ENCODE measurements at regions of chr7 and their contacts with region 1.

Region 1: GRCh38 chr7:66920769-66921395 is at the start of gene TMEM248:
- DNase-seq: peak; percentile 85
- ATAC-seq: peak; percentile 88
- H3K4me3 ChIP-seq: peak within 1 kb of the TSS; percentile 84
- H3K27ac ChIP-seq: peak within 1 kb of the TSS; percentile 80
- H3K4me1 ChIP-seq: peaks cover 11% of the 10 kb centered on the region
- H3K27me3 ChIP-seq: no peaks in the 10 kb centered on the region
- CTCF ChIP-seq: no peak
- EP300 ChIP-seq: no peak
- POLR2A ChIP-seq: peak; percentile 97
- RAD21 ChIP-seq: no peak
- polyA plus RNA-seq, gene TMEM248: 6.3 to 10.5 TPM

Region 2: GRCh38 chr7:66740302-66740979 is 180.4 kb before region 1 on chr7 and contains the start of gene RABGEF1:
- CTCF ChIA-PET with region 1: no interaction called
- POLR2A ChIA-PET with region 1: no interaction called
- RAD21 ChIA-PET with region 1: no interaction called
- SMC1A ChIA-PET with region 1: interaction called, 3 read pairs
- in situ Hi-C with region 1: no loop called
- intact Hi-C with region 1: loop called (anchors 10 kb)
- DNase-seq: peak; percentile 89
- ATAC-seq: peak; percentile 93
- H3K4me3 ChIP-seq: peak within 1 kb of the TSS; percentile 100
- H3K27ac ChIP-seq: peak within 1 kb of the TSS; percentile 88
- H3K4me1 ChIP-seq: peaks cover 18% of the 10 kb centered on the region
- H3K27me3 ChIP-seq: no peaks in the 10 kb centered on the region
- CTCF ChIP-seq: no peak
- EP300 ChIP-seq: 0 out of 4 replicates have a peak, but pooled peaks of 1 of the 2 experiments have one; percentile 28
- POLR2A ChIP-seq: peak; percentile 96
- RAD21 ChIP-seq: no peak
- polyA plus RNA-seq, gene RABGEF1: 10.2 to 11.8 TPM

Region 3: GRCh38 chr7:66844552-66845378 is 76.1 kb before region 1 on chr7:
- CTCF ChIA-PET with region 1: no interaction called
- POLR2A ChIA-PET with region 1: interaction called, 3 read pairs
- RAD21 ChIA-PET with region 1: interaction called, 5 read pairs
- SMC1A ChIA-PET with region 1: interaction called, 5 read pairs
- in situ Hi-C with region 1: no loop called
- intact Hi-C with region 1: loop called (anchors 2 kb)
- DNase-seq: peak; percentile 92
- ATAC-seq: peak; percentile 93
- H3K4me3 ChIP-seq: peak overlapping the region; percentile 93
- H3K27ac ChIP-seq: peak overlapping the region; percentile 61
- H3K4me1 ChIP-seq: no peaks in the 10 kb centered on the region; the same call in 1 of the 2 replicates
- H3K27me3 ChIP-seq: no peaks in the 10 kb centered on the region
- CTCF ChIP-seq: peak in 1 of 3 experiments; percentile 36; a peak in 1 of 6 replicates
- EP300 ChIP-seq: no peak
- POLR2A ChIP-seq: peak; percentile 94
- RAD21 ChIP-seq: no peak

Region 4: DNA sequence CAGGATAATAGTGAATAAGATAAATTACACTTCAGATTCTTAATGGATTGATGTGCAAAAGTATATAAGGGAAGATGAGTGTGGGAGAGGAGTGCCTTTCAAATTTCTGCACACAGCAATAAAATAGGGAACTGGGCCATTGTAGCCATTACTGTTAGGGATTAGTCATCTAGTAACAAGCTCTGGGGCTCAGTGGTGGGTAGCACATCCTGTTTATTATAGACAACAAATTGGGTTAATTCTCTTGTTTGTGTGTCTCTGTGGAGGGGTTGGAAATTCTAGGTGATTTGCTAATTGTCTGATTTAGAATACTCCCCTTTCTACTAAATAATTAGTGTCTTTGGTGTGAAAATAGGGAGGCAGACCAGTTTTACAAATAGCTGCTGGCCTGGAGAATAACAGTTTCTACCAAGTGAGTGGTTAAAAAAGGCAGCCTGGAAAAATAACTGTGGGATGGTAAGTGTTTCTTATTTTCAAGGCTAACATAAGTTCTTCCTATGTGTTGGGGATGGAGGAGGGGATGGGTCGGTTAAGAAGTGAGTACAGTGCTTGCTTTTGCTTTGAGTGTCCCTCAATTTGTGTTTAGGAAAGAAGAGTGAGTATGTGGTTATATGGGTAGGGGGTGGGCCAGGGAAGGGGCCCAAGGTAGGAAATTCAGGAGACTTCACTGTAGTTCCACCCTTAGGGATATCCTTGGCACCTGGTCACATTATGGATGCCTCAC is 43.1 kb before region 1 on chr7:
- CTCF ChIA-PET with region 1: no interaction called
- POLR2A ChIA-PET with region 1: no interaction called
- RAD21 ChIA-PET with region 1: no interaction called
- SMC1A ChIA-PET with region 1: interaction called, 3 read pairs
- in situ Hi-C with region 1: no loop called
- intact Hi-C with region 1: loop called (anchors 2 kb)
- DNase-seq: peak; percentile 54
- ATAC-seq: peak; percentile 99
- H3K4me3 ChIP-seq: peak overlapping the region; percentile 19
- H3K27ac ChIP-seq: peak overlapping the region; percentile 79
- H3K4me1 ChIP-seq: peaks cover 11% of the 10 kb centered on the region; the same call in 1 of the 2 replicates
- H3K27me3 ChIP-seq: no peaks in the 10 kb centered on the region
- CTCF ChIP-seq: no peak
- EP300 ChIP-seq: peak in 1 of 2 experiments; percentile 73; a peak in 1 of 4 replicates
- POLR2A ChIP-seq: no peak
- RAD21 ChIP-seq: no peak

Region 5: GRCh38 chr7:66902844-66903180 is 18.1 kb before region 1 on chr7:
- CTCF ChIA-PET with region 1: no interaction called
- POLR2A ChIA-PET with region 1: no interaction called
- RAD21 ChIA-PET with region 1: no interaction called
- SMC1A ChIA-PET with region 1: no interaction called
- in situ Hi-C with region 1: no loop called
- intact Hi-C with region 1: no loop called
- DNase-seq: no peak
- ATAC-seq: no peak
- H3K4me3 ChIP-seq: no peak overlapping the region
- H3K27ac ChIP-seq: no peak overlapping the region
- H3K4me1 ChIP-seq: no peaks in the 10 kb centered on the region
- H3K27me3 ChIP-seq: no peaks in the 10 kb centered on the region
- CTCF ChIP-seq: no peak
- EP300 ChIP-seq: no peak
- POLR2A ChIP-seq: no peak
- RAD21 ChIP-seq: no peak

Measured in GM12878 (cell line).